MCF 10A (cell line): ENCODE measurements at regions of chr13 and their contacts with region 1.

Region 1: GRCh38 chr13:84917252-84917878 is 881.9 kb downstream of the SLITRK6 start:
- DNase-seq: peak; percentile 40
- H3K4me3 Mint-ChIP-seq: no peak overlapping the region
- H3K27ac Mint-ChIP-seq: no peak overlapping the region
- H3K4me1 Mint-ChIP-seq: no peaks in the 10 kb centered on the region
- H3K27me3 Mint-ChIP-seq: no peaks in the 10 kb centered on the region
- CTCF ChIP-seq: peak; percentile 45

Region 2: GRCh38 chr13:84500016-84500415 is 417.3 kb before region 1 on chr13:
- CTCF ChIA-PET with region 1: no interaction called
- POLR2A ChIA-PET with region 1: no interaction called
- intact Hi-C with region 1: no loop called
- DNase-seq: no peak
- H3K4me3 Mint-ChIP-seq: no peak overlapping the region
- H3K27ac Mint-ChIP-seq: no peak overlapping the region
- H3K4me1 Mint-ChIP-seq: no peaks in the 10 kb centered on the region
- H3K27me3 Mint-ChIP-seq: no peaks in the 10 kb centered on the region
- CTCF ChIP-seq: no peak

Region 3: DNA sequence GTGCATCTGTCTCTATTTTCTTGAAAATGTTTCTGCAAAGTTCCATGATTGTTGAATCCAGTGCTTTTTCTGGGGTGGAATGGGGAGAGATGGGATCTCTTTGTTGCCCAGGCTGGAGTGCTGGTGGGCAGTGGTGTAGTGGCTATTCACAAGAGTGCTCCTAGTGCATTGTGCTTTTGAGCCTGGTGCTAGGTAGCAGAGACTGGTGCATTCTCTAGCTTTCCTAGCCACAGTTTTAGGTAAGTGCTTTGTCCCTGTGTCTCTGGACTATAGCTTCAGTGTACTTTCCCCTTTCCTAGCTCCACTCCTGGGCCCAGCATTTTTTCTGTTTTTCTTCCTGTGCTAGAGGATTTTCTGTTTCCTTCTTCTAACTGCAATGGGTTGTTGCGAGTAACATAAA is 56.3 kb after region 1 on chr13:
- CTCF ChIA-PET with region 1: no interaction called
- POLR2A ChIA-PET with region 1: no interaction called
- intact Hi-C with region 1: no loop called
- DNase-seq: no peak
- H3K4me3 Mint-ChIP-seq: no peak overlapping the region
- H3K27ac Mint-ChIP-seq: no peak overlapping the region
- H3K4me1 Mint-ChIP-seq: no peaks in the 10 kb centered on the region
- H3K27me3 Mint-ChIP-seq: no peaks in the 10 kb centered on the region
- CTCF ChIP-seq: no peak

Region 4: DNA sequence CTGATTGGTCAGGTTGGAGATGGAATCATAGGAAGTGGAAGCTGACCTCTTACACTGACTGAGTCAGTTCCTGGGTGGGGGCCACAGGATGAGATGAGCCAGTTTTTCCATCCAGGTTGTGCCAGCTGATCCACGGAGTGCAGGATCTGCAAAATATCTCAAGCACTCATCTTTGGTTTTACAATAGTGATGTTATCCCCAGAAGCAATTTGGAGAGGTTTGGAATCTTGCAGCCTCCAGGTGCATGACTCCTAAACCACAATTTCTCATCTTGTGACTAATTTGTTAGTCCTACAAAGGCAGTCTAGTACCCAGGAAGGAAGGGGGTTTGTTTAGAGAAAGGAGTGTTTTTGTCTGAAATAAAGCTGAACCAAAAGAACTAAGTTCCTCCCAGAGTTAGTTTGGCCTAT is 669.1 kb after region 1 on chr13:
- CTCF ChIA-PET with region 1: no interaction called
- POLR2A ChIA-PET with region 1: no interaction called
- intact Hi-C with region 1: loop called (anchors 2 kb)
- DNase-seq: peak; percentile 91
- H3K4me3 Mint-ChIP-seq: no peak overlapping the region
- H3K27ac Mint-ChIP-seq: peak overlapping the region; percentile 20
- H3K4me1 Mint-ChIP-seq: peaks cover 37% of the 10 kb centered on the region
- H3K27me3 Mint-ChIP-seq: no peaks in the 10 kb centered on the region
- CTCF ChIP-seq: no peak

Region 5: DNA sequence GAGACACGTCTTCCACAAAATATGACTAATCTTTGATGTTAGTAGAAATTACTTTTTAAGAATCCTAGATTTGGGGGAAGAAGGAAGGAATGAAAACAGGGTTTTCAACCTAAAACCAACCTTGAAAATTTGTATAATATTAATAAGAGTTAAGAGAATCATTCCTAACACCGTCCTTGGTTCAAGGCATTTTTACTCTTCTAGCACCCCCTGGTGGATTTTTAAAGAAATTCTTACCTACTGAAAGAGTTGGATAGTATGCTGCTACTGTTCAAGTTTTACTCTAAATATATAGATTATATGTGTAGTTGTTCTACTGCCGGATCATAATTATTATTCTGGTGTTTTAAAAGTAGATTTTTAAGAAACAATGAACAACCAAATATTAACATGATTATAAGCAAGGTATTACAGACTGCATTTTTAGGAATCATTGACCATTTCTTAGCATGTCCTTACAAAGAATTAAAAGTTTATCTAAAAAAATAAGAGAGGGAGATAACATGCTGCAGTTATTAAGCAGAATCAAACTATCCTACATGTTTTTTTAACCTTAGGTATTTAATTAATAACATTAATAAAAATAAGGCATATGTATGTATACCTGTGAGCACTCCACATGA is 889.3 kb after region 1 on chr13:
- CTCF ChIA-PET with region 1: interaction called, 12 read pairs
- POLR2A ChIA-PET with region 1: no interaction called
- intact Hi-C with region 1: loop called (anchors 1 kb)
- DNase-seq: peak; percentile 66
- H3K4me3 Mint-ChIP-seq: no peak overlapping the region
- H3K27ac Mint-ChIP-seq: no peak overlapping the region
- H3K4me1 Mint-ChIP-seq: no peaks in the 10 kb centered on the region
- H3K27me3 Mint-ChIP-seq: no peaks in the 10 kb centered on the region
- CTCF ChIP-seq: peak; percentile 57